T-cell (primary cell): ENCODE measurements at regions of chr2 and their contacts with region 1.

Region 1: GRCh38 chr2:68121873-68122679 is 35.6 kb upstream of the PNO1 start:
- DNase-seq: peak; percentile 21 to 86 (median 69)
- ATAC-seq: peak; percentile 35 to 70 (median 49)
- H3K4me3 ChIP-seq: no peak overlapping the region
- H3K4me3 Mint-ChIP-seq: no peak overlapping the region
- H3K27ac ChIP-seq: no peak overlapping the region
- H3K27ac Mint-ChIP-seq: no peak overlapping the region
- H3K4me1 ChIP-seq: peaks cover 0 to 9% of the 10 kb centered on the region in 2 experiments
- H3K4me1 Mint-ChIP-seq: peaks cover 0 to 12% (median 6%) of the 10 kb centered on the region in 3 donors
- H3K27me3 ChIP-seq: no peaks in the 10 kb centered on the region
- H3K27me3 Mint-ChIP-seq: no peaks in the 10 kb centered on the region

Region 2: GRCh38 chr2:68031542-68032160 is 90.4 kb before region 1 on chr2:
- CTCF ChIA-PET with region 1: no interaction called
- POLR2A ChIA-PET with region 1: no interaction called
- DNase-seq: peak in 1 of 35 experiments; percentile 60
- ATAC-seq: no peak
- H3K4me3 ChIP-seq: no peak overlapping the region
- H3K4me3 Mint-ChIP-seq: no peak overlapping the region
- H3K27ac ChIP-seq: no peak overlapping the region
- H3K27ac Mint-ChIP-seq: no peak overlapping the region
- H3K4me1 ChIP-seq: peaks cover 0 to 2% of the 10 kb centered on the region in 2 experiments
- H3K4me1 Mint-ChIP-seq: no peaks in the 10 kb centered on the region
- H3K27me3 ChIP-seq: no peaks in the 10 kb centered on the region
- H3K27me3 Mint-ChIP-seq: peaks cover 2 to 3% of the 10 kb centered on the region in 2 donors

Region 3: GRCh38 chr2:68282811-68283418 is 160.8 kb after region 1 on chr2:
- CTCF ChIA-PET with region 1: interaction called, 14 to 22 read pairs
- POLR2A ChIA-PET with region 1: no interaction called
- DNase-seq: peak in 14 of 35 experiments; percentile 2 to 67 (median 13)
- ATAC-seq: peak in 3 of 4 experiments; percentile 32 to 69 (median 54)
- H3K4me3 ChIP-seq: no peak overlapping the region
- H3K4me3 Mint-ChIP-seq: no peak overlapping the region
- H3K27ac ChIP-seq: no peak overlapping the region
- H3K27ac Mint-ChIP-seq: no peak overlapping the region
- H3K4me1 ChIP-seq: no peaks in the 10 kb centered on the region
- H3K4me1 Mint-ChIP-seq: peaks cover 0 to 5% (median 5%) of the 10 kb centered on the region in 3 donors
- H3K27me3 ChIP-seq: peaks cover 0 to 7% of the 10 kb centered on the region in 2 experiments
- H3K27me3 Mint-ChIP-seq: peaks cover 24% of the 10 kb centered on the region in 2 donors

Region 4: GRCh38 chr2:68290901-68291300 is 168.8 kb after region 1 on chr2:
- CTCF ChIA-PET with region 1: interaction called, 14 to 19 read pairs
- POLR2A ChIA-PET with region 1: no interaction called
- DNase-seq: no peak
- ATAC-seq: no peak
- H3K4me3 ChIP-seq: no peak overlapping the region
- H3K4me3 Mint-ChIP-seq: no peak overlapping the region
- H3K27ac ChIP-seq: no peak overlapping the region
- H3K27ac Mint-ChIP-seq: no peak overlapping the region
- H3K4me1 ChIP-seq: no peaks in the 10 kb centered on the region
- H3K4me1 Mint-ChIP-seq: peaks cover 0 to 4% (median 0%) of the 10 kb centered on the region in 3 donors
- H3K27me3 ChIP-seq: peaks cover 0 to 8% of the 10 kb centered on the region in 2 experiments
- H3K27me3 Mint-ChIP-seq: peaks cover 15 to 26% of the 10 kb centered on the region in 2 donors